Breast epithelium (tissue), 4 donors: ENCODE measurements at regions of chr7 and their contacts with region 1.

Region 1: DNA sequence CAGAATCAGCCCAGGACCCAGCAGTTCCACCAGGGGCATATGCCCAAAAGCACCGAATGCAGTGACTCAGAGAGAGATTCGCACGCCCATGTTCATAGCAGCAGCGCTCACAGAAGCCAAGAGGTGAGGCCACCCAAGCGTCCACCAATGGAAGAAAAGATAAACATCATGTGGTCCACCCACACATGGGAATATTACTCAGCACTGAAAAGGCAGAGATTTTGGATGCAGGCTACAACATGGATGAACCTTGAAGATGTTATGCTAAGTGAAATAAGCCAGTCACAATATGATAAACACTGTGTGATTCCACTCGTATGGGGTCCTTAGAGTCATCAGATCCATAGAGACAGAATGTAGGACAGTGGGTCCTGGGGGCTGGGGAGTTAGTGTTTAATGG is 427.4 kb downstream of the DNAJB6 start:
- DNase-seq: no peak
- H3K4me3 ChIP-seq: no peak overlapping the region
- H3K27ac ChIP-seq: no peak overlapping the region
- H3K4me1 ChIP-seq: no peaks in the 10 kb centered on the region
- H3K27me3 ChIP-seq: peaks cover 0 to 4% of the 10 kb centered on the region in 2 donors
- CTCF ChIP-seq: no peak
- POLR2A ChIP-seq: no peak

Region 2: DNA sequence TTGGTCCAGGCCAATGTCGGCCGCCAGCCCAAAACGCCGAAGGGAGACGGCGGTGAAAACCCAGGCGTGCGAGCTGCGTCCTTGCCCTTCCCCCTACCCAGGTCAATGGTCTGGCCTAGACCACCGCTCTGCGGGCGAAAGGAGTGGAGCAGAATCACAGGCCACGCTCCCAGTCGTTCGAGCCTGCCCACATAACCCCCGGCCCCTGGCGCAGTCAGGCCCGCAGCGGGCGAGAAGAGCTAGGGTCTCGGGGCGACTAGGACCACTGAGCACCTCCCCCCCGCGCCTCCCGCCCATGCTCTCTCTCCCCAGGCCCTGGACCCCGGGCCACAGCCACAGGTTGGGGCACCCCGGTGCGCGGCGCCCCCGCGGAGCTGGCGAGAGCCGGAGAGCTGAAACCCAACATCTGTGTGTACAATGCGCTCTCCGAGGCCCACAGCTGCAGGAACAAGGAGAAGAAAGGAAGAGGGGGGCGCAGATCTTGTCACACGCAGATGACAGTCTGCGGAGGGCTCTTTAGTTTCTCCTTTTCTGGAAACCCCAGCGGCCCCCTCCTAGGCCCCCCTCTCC is 72.5 kb before region 1 on chr7:
- intact Hi-C with region 1: loop called (anchors 2 kb)
- DNase-seq: no peak
- H3K4me3 ChIP-seq: peak overlapping the region; percentile 20 to 66 (median 46)
- H3K27ac ChIP-seq: no peak overlapping the region
- H3K4me1 ChIP-seq: peaks cover 0 to 4% of the 10 kb centered on the region in 2 donors
- H3K27me3 ChIP-seq: peaks cover 0 to 70% of the 10 kb centered on the region in 2 donors
- CTCF ChIP-seq: no peak
- POLR2A ChIP-seq: no peak

Region 3: DNA sequence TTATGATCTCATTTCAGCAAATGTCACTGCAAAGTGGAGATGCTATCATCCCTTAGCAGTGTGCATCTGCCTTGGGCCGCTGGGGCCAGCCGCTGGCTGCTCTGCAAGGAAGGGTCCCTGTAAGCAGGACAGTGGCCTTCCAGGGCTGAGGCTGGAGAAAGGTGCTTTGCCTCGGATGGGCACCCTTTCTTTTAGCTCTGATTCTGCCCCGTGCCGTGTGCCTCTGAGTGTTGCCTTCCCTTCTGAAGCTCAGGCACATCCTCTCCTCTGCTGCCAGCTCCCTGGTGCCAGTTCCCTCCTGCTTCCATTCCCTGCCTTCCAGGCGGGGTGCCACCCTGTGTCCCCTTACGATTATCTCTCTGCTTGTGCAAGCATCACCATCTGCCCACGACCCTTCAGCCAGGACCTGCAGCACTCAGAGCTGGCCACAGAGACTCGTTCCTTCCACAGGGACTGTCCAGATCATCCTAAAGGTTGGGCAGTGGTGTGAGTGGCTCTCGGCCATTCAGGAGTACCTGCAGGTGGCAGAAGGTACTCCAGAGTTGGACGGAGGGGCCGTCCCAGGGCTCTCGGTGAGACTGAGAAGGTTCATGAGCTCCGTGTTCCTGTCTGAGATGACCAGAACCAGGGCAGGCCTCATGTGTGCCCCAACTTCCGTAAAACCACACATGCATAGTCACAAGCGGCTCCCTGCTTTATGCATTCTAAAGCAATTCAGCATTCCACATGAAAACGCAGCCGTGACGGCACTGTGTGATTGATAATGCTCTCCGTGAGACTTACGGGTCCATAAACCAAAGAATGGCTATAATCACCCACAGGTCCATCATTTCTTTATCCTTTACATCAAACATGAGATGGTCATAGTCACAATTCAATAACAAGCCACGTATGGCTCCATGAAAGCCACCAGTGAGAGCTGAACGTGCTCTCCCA is 55.9 kb before region 1 on chr7:
- intact Hi-C with region 1: no loop called
- DNase-seq: peak in 1 of 2 donors; percentile 33
- H3K4me3 ChIP-seq: no peak overlapping the region
- H3K27ac ChIP-seq: no peak overlapping the region
- H3K4me1 ChIP-seq: no peaks in the 10 kb centered on the region
- H3K27me3 ChIP-seq: peaks cover 0 to 50% of the 10 kb centered on the region in 2 donors
- CTCF ChIP-seq: no peak
- POLR2A ChIP-seq: no peak

Region 4: DNA sequence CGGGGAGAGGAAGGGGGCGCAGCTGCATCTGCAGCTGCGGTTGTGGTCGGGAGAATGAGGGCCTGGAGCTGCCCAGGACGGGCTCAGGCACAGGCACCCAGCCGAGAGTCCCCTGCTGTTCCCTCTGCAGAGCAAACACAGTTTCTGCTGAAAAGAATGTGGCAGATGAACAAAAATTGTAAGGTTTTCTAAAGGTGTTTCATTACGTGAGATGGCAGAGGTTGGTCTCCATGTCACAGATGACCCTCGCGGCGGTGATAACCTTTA is 28.8 kb after region 1 on chr7:
- intact Hi-C with region 1: no loop called
- DNase-seq: no peak
- H3K4me3 ChIP-seq: no peak overlapping the region
- H3K27ac ChIP-seq: no peak overlapping the region
- H3K4me1 ChIP-seq: no peaks in the 10 kb centered on the region
- H3K27me3 ChIP-seq: peaks cover 0 to 17% of the 10 kb centered on the region in 2 donors
- CTCF ChIP-seq: no peak
- POLR2A ChIP-seq: no peak